ENCODE measurements at regions of chr19 and their contacts with region 1.

Region 1: GRCh38 chr19:49676690-49677231 is 310 bp upstream of the PRMT1 start:
- DNase-seq: peak; percentile 100
- ATAC-seq: peak; percentile 71
- H3K4me3 ChIP-seq: peak overlapping the region; percentile 93 to 99
- H3K27ac ChIP-seq: peak overlapping the region; percentile 99
- H3K4me1 ChIP-seq: peaks cover 32 to 50% of the 10 kb centered on the region in 2 experiments
- H3K27me3 ChIP-seq: no peaks in the 10 kb centered on the region
- CTCF ChIP-seq: no peak
- POLR2A ChIP-seq: no peak
- RAD21 ChIP-seq: no peak

Region 2: GRCh38 chr19:49497047-49497788 is 179.5 kb before region 1 on chr19:
- CTCF ChIA-PET with region 1: no interaction called
- POLR2A ChIA-PET with region 1: interaction called, 15 read pairs
- RAD21 ChIA-PET with region 1: no interaction called
- intact Hi-C with region 1: loop called (anchors 2 kb)
- DNase-seq: no peak
- ATAC-seq: no peak
- H3K4me3 ChIP-seq: peak overlapping the region; percentile 90 to 96
- H3K27ac ChIP-seq: peak overlapping the region; percentile 86
- H3K4me1 ChIP-seq: peaks cover 15 to 61% of the 10 kb centered on the region in 2 experiments
- H3K27me3 ChIP-seq: no peaks in the 10 kb centered on the region
- CTCF ChIP-seq: no peak
- POLR2A ChIP-seq: no peak
- RAD21 ChIP-seq: no peak

Region 3: GRCh38 chr19:49570138-49570856 is 106.5 kb before region 1 on chr19:
- CTCF ChIA-PET with region 1: interaction called, 17 read pairs
- POLR2A ChIA-PET with region 1: interaction called, 5 read pairs
- RAD21 ChIA-PET with region 1: no interaction called
- intact Hi-C with region 1: loop called (anchors 5 kb)
- DNase-seq: peak; percentile 83
- ATAC-seq: peak; percentile 77
- H3K4me3 ChIP-seq: no peak overlapping the region
- H3K27ac ChIP-seq: peak overlapping the region; percentile 47
- H3K4me1 ChIP-seq: peaks cover 44 to 61% of the 10 kb centered on the region in 2 experiments
- H3K27me3 ChIP-seq: no peaks in the 10 kb centered on the region
- CTCF ChIP-seq: peak; percentile 97 to 99 (median 99)
- POLR2A ChIP-seq: no peak
- RAD21 ChIP-seq: peak; percentile 87

Region 4: GRCh38 chr19:49590071-49590970 is 86.4 kb before region 1 on chr19:
- CTCF ChIA-PET with region 1: interaction called, 3 read pairs
- POLR2A ChIA-PET with region 1: no interaction called
- RAD21 ChIA-PET with region 1: interaction called in 1 of 2 experiments, 3 read pairs
- intact Hi-C with region 1: loop called (anchors 5 kb)
- DNase-seq: peak; percentile 97
- ATAC-seq: peak; percentile 82
- H3K4me3 ChIP-seq: peak overlapping the region; percentile 89 to 93
- H3K27ac ChIP-seq: peak overlapping the region; percentile 98
- H3K4me1 ChIP-seq: peaks cover 10 to 33% of the 10 kb centered on the region in 2 experiments; a peak in 3 of 4 replicates
- H3K27me3 ChIP-seq: no peaks in the 10 kb centered on the region
- CTCF ChIP-seq: no peak
- POLR2A ChIP-seq: peak; percentile 90
- RAD21 ChIP-seq: no peak

Region 5: DNA sequence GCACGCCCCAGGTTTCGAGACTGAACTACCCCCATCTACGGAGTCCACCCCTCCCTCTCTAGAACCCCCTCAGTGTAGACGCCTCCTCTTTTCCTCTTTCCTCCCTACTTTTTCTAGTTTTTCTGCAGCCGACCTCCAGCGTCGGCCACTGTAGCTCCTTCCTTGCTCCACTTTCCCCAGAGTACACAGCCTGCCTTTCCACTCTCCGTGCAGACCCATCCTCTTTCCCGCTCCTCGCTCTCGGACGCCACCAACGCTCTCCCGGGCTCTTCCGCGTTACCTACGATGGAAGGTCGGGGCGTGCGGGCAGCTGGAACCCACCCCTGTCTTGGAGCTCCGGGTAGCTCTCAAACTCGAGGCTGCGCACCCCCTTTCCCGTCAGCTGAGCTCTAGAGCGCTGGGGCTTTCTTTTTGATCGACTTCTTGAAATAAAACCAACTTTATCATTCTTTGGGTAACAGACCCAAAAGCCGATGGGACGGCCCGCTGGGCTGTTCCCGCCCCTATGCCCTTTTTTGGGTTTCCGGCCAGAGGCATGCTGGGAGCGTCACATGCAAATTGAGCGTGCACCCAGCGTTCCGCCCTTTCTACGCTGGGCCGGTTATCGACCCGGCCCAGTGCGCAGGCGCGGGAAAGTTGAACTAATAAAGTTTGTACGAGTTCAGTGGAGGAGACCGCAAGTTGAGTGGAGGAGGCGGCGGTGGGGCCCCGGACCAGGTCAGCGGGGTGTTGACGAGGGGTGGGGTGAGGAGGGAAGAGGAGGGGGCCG is 11.2 kb before region 1 on chr19 and contains the starts of genes BCL2L12 and IRF3:
- CTCF ChIA-PET with region 1: interaction called, 6 read pairs
- POLR2A ChIA-PET with region 1: interaction called, 53 read pairs
- RAD21 ChIA-PET with region 1: no interaction called
- intact Hi-C with region 1: no loop called
- DNase-seq: peak; percentile 88
- ATAC-seq: peak; percentile 75
- H3K4me3 ChIP-seq: peak within 1 kb of the TSS; percentile 90 to 95
- H3K27ac ChIP-seq: peak within 1 kb of the TSS; percentile 95
- H3K4me1 ChIP-seq: peaks cover 6 to 30% of the 10 kb centered on the region in 2 experiments; a peak in 3 of 4 replicates
- H3K27me3 ChIP-seq: no peaks in the 10 kb centered on the region
- CTCF ChIP-seq: no peak
- POLR2A ChIP-seq: no peak
- RAD21 ChIP-seq: no peak
- total RNA-seq, gene BCL2L12: 93.9 TPM
- total RNA-seq, gene IRF3: 129 TPM

Region 6: DNA sequence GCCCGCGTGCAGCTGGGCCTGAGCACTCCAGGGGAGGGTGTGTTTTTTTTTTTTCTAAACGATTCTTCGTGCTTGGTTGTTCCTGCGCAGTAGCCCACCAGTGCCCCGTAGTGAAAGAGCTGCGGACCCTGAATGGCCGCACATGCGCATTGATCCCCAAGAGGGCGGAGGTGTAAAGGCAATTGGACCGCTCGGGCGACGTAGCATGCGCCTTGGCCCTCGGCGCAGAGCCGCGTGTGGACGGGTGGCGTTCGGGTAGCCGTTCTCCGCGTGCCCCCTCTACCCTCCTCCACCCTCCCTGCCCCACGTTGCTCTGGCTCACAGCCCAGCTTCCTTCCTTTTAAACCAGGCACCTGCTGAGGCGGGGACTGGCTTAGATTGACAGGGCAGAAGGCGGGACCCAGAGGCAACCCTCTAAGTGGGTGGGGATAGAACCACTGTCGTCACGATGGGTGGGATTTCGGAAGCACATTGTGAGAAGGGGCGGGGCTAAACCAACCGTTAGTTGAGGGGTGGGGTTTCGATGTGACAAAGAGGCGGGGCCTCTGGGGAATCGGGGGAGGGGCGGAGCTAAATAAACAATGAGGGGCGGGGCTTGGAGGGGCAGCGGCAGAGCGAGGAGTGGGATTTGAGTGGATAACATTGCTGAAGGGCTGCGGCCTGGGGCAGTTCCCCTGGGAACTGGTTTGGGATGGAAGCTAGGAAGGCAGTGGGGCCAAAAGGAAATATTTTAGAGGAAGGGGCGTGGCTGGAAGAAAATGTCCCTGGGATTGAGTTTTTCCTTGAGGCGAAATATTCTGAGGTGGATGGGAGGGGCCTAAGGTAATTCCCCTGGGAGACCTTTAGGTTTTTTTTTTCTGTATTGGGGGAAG is 253.1 kb after region 1 on chr19:
- CTCF ChIA-PET with region 1: no interaction called
- POLR2A ChIA-PET with region 1: interaction called, 12 read pairs
- RAD21 ChIA-PET with region 1: no interaction called
- intact Hi-C with region 1: no loop called
- DNase-seq: peak; percentile 98
- ATAC-seq: peak; percentile 88
- H3K4me3 ChIP-seq: peak overlapping the region; percentile 58 to 97
- H3K27ac ChIP-seq: peak overlapping the region; percentile 99
- H3K4me1 ChIP-seq: peaks cover 11 to 29% of the 10 kb centered on the region in 2 experiments; a peak in 3 of 4 replicates
- H3K27me3 ChIP-seq: no peaks in the 10 kb centered on the region
- CTCF ChIP-seq: no peak
- POLR2A ChIP-seq: peak; percentile 77
- RAD21 ChIP-seq: no peak